Lower leg skin (tissue), 4 donors: ENCODE measurements at regions of chr3 and their contacts with region 1.

Region 1: GRCh38 chr3:172586436-172586835 is 63.2 kb upstream of the TNFSF10 start:
- DNase-seq: no peak
- H3K4me3 ChIP-seq: no peak overlapping the region
- CTCF ChIP-seq: no peak
- POLR2A ChIP-seq: no peak

Region 2: DNA sequence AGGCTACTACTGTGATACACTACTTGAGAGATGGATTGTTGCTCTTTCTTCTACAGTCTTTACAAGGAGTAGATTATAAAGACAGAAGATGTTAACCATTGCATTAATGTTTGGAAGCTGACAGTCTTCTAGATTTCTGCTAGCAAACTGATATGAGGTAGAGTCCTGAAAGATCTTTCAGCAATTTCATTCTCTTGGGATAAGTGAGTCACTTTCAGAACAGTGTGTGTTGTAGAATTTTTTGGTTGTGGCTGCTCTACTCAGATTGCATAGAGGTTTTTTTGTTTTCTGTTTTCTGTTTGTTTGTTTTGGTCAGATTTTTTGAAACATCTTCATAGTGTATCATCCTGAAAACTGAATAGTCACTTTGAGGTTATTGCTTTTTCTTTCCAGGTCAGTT is 80.3 kb before region 1 on chr3:
- intact Hi-C with region 1: loop called (anchors 5 kb)
- DNase-seq: no peak
- H3K4me3 ChIP-seq: no peak overlapping the region
- CTCF ChIP-seq: no peak
- POLR2A ChIP-seq: no peak